ENCODE measurements at regions of chr20 and their contacts with region 1.

Region 1: GRCh38 chr20:39588148-39588757 is 626.1 kb downstream of the DHX35 start:
- DNase-seq: peak; percentile 89
- H3K4me3 ChIP-seq: peak overlapping the region in 1 of 3 experiments; percentile 24
- H3K27ac ChIP-seq: peak overlapping the region; percentile 74
- H3K4me1 ChIP-seq: peaks cover 21% of the 10 kb centered on the region
- H3K27me3 ChIP-seq: no peaks in the 10 kb centered on the region
- CTCF ChIP-seq: no peak
- POLR2A ChIP-seq: no peak

Region 2: GRCh38 chr20:39057911-39058310 is 530.3 kb before region 1 on chr20:
- CTCF ChIA-PET with region 1: no interaction called
- POLR2A ChIA-PET with region 1: no interaction called
- dilution Hi-C with region 1: no loop called
- intact Hi-C with region 1: no loop called
- DNase-seq: no peak
- H3K4me3 ChIP-seq: no peak overlapping the region
- H3K27ac ChIP-seq: no peak overlapping the region
- H3K4me1 ChIP-seq: no peaks in the 10 kb centered on the region
- H3K27me3 ChIP-seq: no peaks in the 10 kb centered on the region
- CTCF ChIP-seq: no peak
- POLR2A ChIP-seq: no peak

Region 3: GRCh38 chr20:39623584-39624234 is 35.5 kb after region 1 on chr20:
- CTCF ChIA-PET with region 1: no interaction called
- POLR2A ChIA-PET with region 1: no interaction called
- dilution Hi-C with region 1: no loop called
- intact Hi-C with region 1: no loop called
- DNase-seq: peak; percentile 30
- H3K4me3 ChIP-seq: no peak overlapping the region
- H3K27ac ChIP-seq: no peak overlapping the region
- H3K4me1 ChIP-seq: no peaks in the 10 kb centered on the region
- H3K27me3 ChIP-seq: no peaks in the 10 kb centered on the region
- CTCF ChIP-seq: no peak
- POLR2A ChIP-seq: no peak

Region 4: DNA sequence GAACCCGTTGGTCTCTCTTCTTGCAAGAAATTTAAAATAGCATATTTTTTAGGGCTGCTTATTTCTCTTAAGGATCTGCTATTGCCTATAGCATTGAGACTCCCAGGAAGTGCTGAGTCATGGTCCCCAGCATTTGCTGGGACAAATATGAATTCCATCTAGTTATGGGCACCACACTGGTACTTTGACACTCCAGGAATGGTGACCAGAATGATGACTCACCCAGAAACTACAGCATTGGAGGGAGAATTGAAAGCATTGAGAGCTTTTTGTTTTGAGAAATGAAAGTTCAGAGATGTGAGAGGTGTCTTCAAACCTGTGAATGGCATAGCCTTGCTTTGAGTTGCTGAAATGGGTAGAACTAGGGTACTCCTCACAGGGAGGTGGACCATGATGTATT is 73.6 kb after region 1 on chr20:
- CTCF ChIA-PET with region 1: no interaction called
- POLR2A ChIA-PET with region 1: no interaction called
- dilution Hi-C with region 1: no loop called
- intact Hi-C with region 1: loop called (anchors 1 kb)
- DNase-seq: peak; percentile 7
- H3K4me3 ChIP-seq: no peak overlapping the region
- H3K27ac ChIP-seq: no peak overlapping the region
- H3K4me1 ChIP-seq: peaks cover 28% of the 10 kb centered on the region
- H3K27me3 ChIP-seq: no peaks in the 10 kb centered on the region
- CTCF ChIP-seq: no peak
- POLR2A ChIP-seq: no peak

Region 5: DNA sequence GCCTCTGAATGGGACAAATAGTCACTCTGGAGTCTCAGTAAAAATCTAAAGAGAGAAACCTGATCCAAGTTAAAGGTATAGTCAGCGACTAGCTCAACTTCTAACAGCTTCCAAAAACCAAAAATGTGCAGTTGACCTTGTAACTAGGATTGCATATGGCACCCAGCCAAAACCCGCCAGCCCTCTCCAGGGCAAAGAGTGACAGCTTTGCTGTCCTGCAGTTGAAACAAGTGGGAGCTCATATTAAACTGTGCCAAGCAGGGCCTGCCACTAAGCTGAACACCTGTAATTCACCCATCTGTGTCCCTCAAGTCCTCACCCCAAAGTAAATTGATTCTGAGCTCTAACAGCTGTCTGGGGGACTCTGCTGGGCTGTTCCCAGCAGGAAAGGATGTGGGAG is 405.5 kb after region 1 on chr20:
- CTCF ChIA-PET with region 1: no interaction called
- POLR2A ChIA-PET with region 1: no interaction called
- dilution Hi-C with region 1: no loop called
- intact Hi-C with region 1: no loop called
- DNase-seq: no peak
- H3K4me3 ChIP-seq: no peak overlapping the region
- H3K27ac ChIP-seq: no peak overlapping the region
- H3K4me1 ChIP-seq: no peaks in the 10 kb centered on the region
- H3K27me3 ChIP-seq: no peaks in the 10 kb centered on the region
- CTCF ChIP-seq: no peak
- POLR2A ChIP-seq: no peak

Measured in endothelial cell of umbilical vein (primary cell).